PC-9 (cell line): ENCODE measurements at regions of chr1 and their contacts with region 1.

Region 1: DNA sequence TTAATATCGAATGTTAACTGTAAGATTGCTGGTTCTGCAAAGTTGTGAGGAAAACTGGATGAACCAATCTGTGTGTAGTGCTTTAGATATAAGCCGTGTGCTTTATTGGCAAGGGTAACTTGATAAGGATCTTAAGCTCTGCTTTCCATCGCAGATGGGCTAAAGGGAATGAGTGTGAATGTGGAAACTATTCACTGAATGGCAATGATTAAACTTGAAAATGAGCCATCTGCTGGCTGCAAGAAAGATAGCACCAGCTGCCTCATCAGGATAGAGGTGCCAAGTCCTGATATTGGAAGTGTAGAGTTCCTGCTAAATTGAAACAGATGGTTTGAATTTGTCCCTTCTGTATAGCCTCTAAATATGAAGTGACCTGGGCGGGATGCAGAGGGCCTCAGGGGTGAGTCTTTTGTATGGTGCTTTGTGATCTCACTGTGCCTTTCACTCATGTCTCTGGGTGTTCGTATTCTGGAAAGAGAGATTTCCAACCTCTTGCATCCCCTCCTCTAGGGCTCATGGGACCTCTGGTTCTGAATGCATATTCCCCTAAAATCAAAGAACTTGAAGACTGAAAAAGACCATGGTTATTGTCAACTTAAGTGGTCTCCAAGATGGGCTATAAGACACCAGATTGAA is 9.2 kb downstream of the FCRL3 start:
- DNase-seq: no peak
- H3K4me3 ChIP-seq: no peak overlapping the region
- H3K27ac ChIP-seq: no peak overlapping the region
- H3K4me1 ChIP-seq: no peaks in the 10 kb centered on the region
- H3K27me3 ChIP-seq: no peaks in the 10 kb centered on the region
- CTCF ChIP-seq: peak; percentile 59

Region 2: GRCh38 chr1:157170677-157171515 is 520.5 kb before region 1 on chr1:
- CTCF ChIA-PET with region 1: no interaction called
- POLR2A ChIA-PET with region 1: no interaction called
- intact Hi-C with region 1: loop called (anchors 5 kb)
- DNase-seq: peak; percentile 34 to 41
- H3K4me3 ChIP-seq: no peak overlapping the region
- H3K27ac ChIP-seq: no peak overlapping the region
- H3K4me1 ChIP-seq: no peaks in the 10 kb centered on the region
- H3K27me3 ChIP-seq: peaks cover 61% of the 10 kb centered on the region
- CTCF ChIP-seq: peak; percentile 74

Region 3: GRCh38 chr1:157438146-157438545 is 253.3 kb before region 1 on chr1:
- CTCF ChIA-PET with region 1: no interaction called
- POLR2A ChIA-PET with region 1: no interaction called
- intact Hi-C with region 1: no loop called
- DNase-seq: no peak
- H3K4me3 ChIP-seq: no peak overlapping the region
- H3K27ac ChIP-seq: no peak overlapping the region
- H3K4me1 ChIP-seq: no peaks in the 10 kb centered on the region
- H3K27me3 ChIP-seq: no peaks in the 10 kb centered on the region
- CTCF ChIP-seq: no peak

Region 4: GRCh38 chr1:158930504-158930903 is 1239.1 kb after region 1 on chr1:
- CTCF ChIA-PET with region 1: no interaction called
- POLR2A ChIA-PET with region 1: interaction called, 15 read pairs
- intact Hi-C with region 1: no loop called
- DNase-seq: no peak
- H3K4me3 ChIP-seq: no peak overlapping the region
- H3K27ac ChIP-seq: no peak overlapping the region
- H3K4me1 ChIP-seq: no peaks in the 10 kb centered on the region
- H3K27me3 ChIP-seq: no peaks in the 10 kb centered on the region; the same call in 1 of the 2 replicates
- CTCF ChIP-seq: no peak